ENCODE measurements at regions of chr11 and their contacts with region 1.

Region 1: GRCh38 chr11:9384535-9385303 is at the start of gene IPO7:
- DNase-seq: peak; percentile 89
- H3K4me3 ChIP-seq: peak within 1 kb of the TSS; percentile 65 to 86 (median 70)
- H3K27ac ChIP-seq: peak within 1 kb of the TSS; percentile 89
- H3K4me1 ChIP-seq: peaks cover 6% of the 10 kb centered on the region
- H3K27me3 ChIP-seq: no peaks in the 10 kb centered on the region
- CTCF ChIP-seq: peak; percentile 18 to 42
- total RNA-seq, gene IPO7: 122 to 158 TPM

Region 2: DNA sequence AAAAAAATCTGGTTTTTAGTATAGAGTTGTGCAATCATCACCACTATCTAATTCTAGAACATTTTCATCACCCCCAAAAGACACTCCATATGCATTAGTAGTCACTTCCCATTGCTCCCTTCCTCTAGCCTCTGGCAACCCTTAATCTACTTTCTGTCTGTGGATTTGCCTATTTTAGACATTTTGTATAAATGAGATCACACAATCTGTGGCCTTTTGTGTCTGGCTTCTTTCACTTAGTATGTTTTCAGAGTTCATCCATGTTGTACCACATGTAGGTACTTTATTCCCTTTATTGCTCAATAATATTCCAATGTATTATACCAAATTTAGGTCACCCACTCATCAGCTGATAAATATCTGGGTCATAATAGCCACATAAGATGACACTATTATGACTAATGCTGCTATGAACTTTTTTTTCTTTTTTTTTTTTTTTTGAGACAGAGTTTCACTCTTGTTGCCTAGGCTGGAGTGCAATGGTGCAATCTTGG is 225.8 kb before region 1 on chr11:
- CTCF ChIA-PET with region 1: no interaction called
- dilution Hi-C with region 1: no loop called
- in situ Hi-C with region 1: loop called in 1 of 2 experiments (anchors 25 kb)
- intact Hi-C with region 1: no loop called
- DNase-seq: peak; percentile 65
- H3K4me3 ChIP-seq: no peak overlapping the region
- H3K27ac ChIP-seq: no peak overlapping the region
- H3K4me1 ChIP-seq: peaks cover 5% of the 10 kb centered on the region
- H3K27me3 ChIP-seq: no peaks in the 10 kb centered on the region
- CTCF ChIP-seq: no peak

Region 3: GRCh38 chr11:9273376-9274336 is 111.1 kb before region 1 on chr11:
- CTCF ChIA-PET with region 1: no interaction called
- dilution Hi-C with region 1: no loop called
- in situ Hi-C with region 1: no loop called
- intact Hi-C with region 1: loop called (anchors 5 kb)
- DNase-seq: peak; percentile 70
- H3K4me3 ChIP-seq: no peak overlapping the region
- H3K27ac ChIP-seq: no peak overlapping the region
- H3K4me1 ChIP-seq: no peaks in the 10 kb centered on the region
- H3K27me3 ChIP-seq: no peaks in the 10 kb centered on the region
- CTCF ChIP-seq: no peak

Region 4: DNA sequence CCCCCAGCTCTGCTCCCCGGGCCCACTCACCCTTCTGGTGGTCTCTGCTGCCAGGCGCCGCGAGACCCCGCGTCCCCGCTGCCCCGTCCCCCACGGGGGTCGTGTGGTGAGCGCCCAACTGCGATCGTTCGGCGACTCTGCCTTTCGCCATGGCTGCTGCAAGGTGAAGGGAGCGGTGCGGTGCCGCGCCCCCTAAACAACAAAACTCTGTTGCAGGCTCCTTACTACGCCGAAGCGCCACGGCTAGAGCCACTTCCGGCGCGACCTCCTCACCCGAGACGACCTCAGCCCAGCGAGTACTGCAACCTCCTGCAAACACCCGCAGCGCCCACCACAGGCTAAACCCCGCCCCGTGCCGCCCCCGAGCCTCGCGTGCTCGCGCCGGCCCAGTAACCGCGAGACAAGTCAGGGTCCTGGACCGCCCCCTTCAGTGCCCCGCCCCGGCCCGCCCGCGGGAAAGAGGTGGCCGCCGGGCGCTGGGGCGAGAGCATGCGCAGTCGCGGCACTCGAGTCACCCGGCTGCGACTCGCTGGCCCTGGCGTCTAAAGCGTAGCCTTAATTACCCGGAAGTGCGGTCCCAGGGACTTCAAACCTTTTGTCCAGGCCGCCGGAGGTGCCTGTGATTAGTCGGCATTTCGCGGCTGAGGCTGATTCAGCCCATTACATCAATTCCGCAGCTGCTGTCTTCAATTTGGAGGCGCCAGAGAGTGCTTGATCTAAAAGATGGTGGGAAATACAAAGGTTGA is 70.3 kb before region 1 on chr11 and contains the start of gene TMEM41B:
- CTCF ChIA-PET with region 1: no interaction called
- dilution Hi-C with region 1: no loop called
- in situ Hi-C with region 1: loop called in 1 of 2 experiments (anchors 10 kb)
- intact Hi-C with region 1: loop called (anchors 1 kb)
- DNase-seq: peak; percentile 98
- H3K4me3 ChIP-seq: peak within 1 kb of the TSS; percentile 73 to 82 (median 80)
- H3K27ac ChIP-seq: peak within 1 kb of the TSS; percentile 73
- H3K4me1 ChIP-seq: peaks cover 6% of the 10 kb centered on the region
- H3K27me3 ChIP-seq: no peaks in the 10 kb centered on the region
- CTCF ChIP-seq: peak in 1 of 2 donors; percentile 25
- total RNA-seq, gene TMEM41B: 58.2 to 59.7 TPM

Region 5: DNA sequence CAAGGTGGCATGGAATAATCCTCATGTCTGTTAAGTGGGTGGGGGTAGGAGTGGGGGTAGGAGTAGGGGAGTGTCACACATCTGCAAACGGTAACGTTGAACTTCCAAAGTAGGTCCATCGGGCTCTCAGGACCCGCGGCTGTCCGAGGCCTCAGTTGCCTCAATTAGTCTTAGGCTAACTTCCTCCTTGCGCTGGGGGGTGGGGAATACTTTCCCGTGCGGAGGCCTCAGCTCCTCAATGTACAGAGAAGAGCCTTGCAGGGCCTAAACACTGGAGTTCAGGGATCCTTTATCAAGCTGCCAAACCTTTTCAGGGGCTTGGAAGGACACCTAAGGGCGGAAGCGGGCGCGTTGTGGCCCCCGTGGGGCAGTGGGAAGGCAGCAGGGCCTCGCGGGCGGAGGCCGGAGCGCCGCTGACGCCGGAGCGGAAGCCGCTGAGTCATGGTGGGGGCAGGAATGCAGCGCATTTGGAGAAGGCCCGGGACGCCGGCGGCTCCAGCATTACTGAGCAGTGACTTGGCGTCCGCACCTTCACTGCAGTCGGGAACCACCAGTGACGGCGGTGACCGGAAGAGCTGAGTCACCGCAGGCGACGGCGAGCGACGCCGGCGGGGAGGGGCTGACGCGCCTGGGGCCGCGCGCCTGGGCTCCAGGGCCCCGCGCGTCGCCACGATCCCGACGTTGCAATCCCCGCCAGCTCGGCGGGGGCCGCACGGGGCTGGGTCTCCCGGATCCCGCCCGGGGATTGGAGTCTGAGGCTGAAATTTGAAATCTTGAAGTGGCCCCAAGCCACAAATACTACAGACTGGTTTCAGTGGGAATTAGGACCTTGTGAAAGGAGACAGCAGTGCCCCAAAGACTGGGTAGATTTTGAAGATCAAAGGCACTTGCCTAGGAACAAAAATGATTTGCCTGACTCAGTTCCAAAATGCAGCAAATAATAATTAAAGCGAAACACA is 20.5 kb before region 1 on chr11:
- CTCF ChIA-PET with region 1: no interaction called
- dilution Hi-C with region 1: no loop called
- in situ Hi-C with region 1: no loop called
- intact Hi-C with region 1: loop called (anchors 1 kb)
- DNase-seq: peak; percentile 95
- H3K4me3 ChIP-seq: peak overlapping the region in 2 of 3 experiments; percentile 30 to 47
- H3K27ac ChIP-seq: peak overlapping the region; percentile 96
- H3K4me1 ChIP-seq: peaks cover 35% of the 10 kb centered on the region
- H3K27me3 ChIP-seq: no peaks in the 10 kb centered on the region
- CTCF ChIP-seq: no peak